ENCODE measurements at regions of chr1 and their contacts with region 1.

Region 1: DNA sequence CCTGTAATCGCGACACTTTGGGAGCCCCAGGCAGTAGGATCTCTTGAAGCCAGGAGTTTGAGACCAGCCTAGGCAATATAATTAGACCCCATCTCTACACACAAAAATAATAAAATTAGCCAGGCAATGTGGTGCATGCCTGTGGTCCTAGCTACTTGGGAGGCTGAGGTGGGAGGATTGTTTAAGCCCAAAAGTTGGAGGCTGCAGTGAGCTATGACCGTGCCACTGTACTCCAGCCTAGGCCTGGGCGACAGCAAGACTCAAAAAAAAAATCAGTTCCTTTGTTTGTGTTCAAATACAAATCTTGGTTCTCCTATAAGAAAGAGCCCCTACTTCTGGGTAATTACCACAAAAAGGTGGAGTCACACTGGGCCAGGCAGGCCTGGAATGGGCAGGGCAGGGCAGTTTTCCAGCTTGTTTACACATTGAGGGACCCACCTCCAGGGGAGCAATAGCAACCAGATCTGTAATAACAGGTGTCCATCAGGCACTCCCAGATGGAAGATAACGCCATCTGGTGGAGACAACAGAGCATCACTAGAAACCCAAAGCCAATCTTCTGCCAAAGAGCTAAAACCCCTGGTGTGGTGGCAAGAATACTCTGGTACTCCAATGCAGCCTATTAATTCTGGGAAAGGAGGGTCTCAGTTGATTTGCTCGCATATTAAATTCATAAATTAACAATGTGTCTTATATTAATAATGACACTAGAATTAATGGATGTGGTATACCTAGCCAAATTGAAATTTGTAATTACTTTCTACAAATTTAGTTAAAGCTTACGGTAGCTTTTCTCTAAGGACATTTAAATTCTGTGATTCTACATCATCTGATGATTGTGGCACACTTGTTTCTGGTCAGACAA is 13.2 kb downstream of the PPP1R15B start:
- DNase-seq: peak; percentile 97
- H3K4me3 Mint-ChIP-seq: no peak overlapping the region
- H3K27ac Mint-ChIP-seq: peak overlapping the region; percentile 84
- H3K4me1 Mint-ChIP-seq: no peaks in the 10 kb centered on the region
- H3K27me3 Mint-ChIP-seq: no peaks in the 10 kb centered on the region
- CTCF ChIP-seq: peak; percentile 98

Region 2: GRCh38 chr1:203682473-203683383 is 715.7 kb before region 1 on chr1:
- CTCF ChIA-PET with region 1: no interaction called
- POLR2A ChIA-PET with region 1: no interaction called
- intact Hi-C with region 1: no loop called
- DNase-seq: no peak
- H3K4me3 Mint-ChIP-seq: no peak overlapping the region
- H3K27ac Mint-ChIP-seq: no peak overlapping the region
- H3K4me1 Mint-ChIP-seq: peaks cover 5% of the 10 kb centered on the region
- H3K27me3 Mint-ChIP-seq: no peaks in the 10 kb centered on the region
- CTCF ChIP-seq: no peak

Region 3: GRCh38 chr1:203861379-203862184 is 536.9 kb before region 1 on chr1 and contains the start of gene SNRPE:
- CTCF ChIA-PET with region 1: interaction called, 11 read pairs
- POLR2A ChIA-PET with region 1: interaction called, 13 read pairs
- intact Hi-C with region 1: no loop called
- DNase-seq: peak; percentile 100
- H3K4me3 Mint-ChIP-seq: peak within 1 kb of the TSS; percentile 100
- H3K27ac Mint-ChIP-seq: peak within 1 kb of the TSS; percentile 100
- H3K4me1 Mint-ChIP-seq: peaks cover 43% of the 10 kb centered on the region
- H3K27me3 Mint-ChIP-seq: no peaks in the 10 kb centered on the region
- CTCF ChIP-seq: peak; percentile 100
- total RNA-seq, gene SNRPE: 358 and 423 TPM in 2 replicates

Region 4: DNA sequence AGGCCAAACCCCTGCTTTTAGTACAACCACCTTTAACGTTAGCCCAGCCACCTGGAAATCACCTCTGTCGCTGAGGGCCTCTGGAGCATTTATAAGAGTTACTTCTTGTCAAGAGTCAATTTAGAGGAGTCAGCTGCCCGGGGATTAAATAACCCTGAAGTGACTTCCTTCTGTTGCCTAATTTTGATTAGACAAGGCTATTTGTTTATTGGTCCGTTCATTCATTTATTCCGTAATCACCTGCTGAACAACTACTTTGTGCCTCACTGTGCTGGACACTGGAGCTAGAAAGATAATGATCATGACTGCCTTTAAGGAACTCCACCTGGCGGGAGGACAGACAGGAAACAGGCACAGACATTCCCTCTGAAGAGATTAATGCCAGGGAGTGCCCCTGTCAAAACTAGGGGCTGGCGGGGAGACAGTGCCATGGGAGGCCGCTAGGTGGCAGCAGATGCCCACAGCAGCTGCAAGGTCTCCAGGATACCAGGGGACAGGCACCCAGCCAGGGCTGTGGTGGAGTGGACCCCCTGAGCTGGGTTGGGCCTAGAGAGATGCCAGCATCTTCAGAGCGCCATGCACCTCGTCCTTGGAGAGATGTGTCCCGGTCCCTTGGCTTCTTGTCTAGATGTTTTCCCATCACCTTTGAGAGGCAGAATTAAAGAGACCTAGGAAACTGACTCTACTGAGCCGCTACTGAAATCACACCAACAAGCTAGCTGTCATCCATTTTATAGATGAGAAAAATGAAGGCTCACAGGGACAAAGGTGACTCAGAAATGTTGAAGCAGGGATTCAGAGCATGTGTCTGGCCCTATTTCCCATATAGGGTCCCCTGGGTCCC is 236.0 kb before region 1 on chr1:
- CTCF ChIA-PET with region 1: interaction called, 123 read pairs
- POLR2A ChIA-PET with region 1: interaction called, 12 read pairs
- intact Hi-C with region 1: loop called (anchors 1 kb)
- DNase-seq: peak; percentile 95
- H3K4me3 Mint-ChIP-seq: no peak overlapping the region
- H3K27ac Mint-ChIP-seq: no peak overlapping the region
- H3K4me1 Mint-ChIP-seq: peaks cover 6% of the 10 kb centered on the region
- H3K27me3 Mint-ChIP-seq: no peaks in the 10 kb centered on the region
- CTCF ChIP-seq: peak; percentile 100

Region 5: GRCh38 chr1:204296431-204296988 is 101.9 kb before region 1 on chr1:
- CTCF ChIA-PET with region 1: interaction called, 10 read pairs
- POLR2A ChIA-PET with region 1: interaction called, 4 read pairs
- intact Hi-C with region 1: no loop called
- DNase-seq: peak; percentile 62
- H3K4me3 Mint-ChIP-seq: peak overlapping the region; percentile 40
- H3K27ac Mint-ChIP-seq: peak overlapping the region; percentile 62
- H3K4me1 Mint-ChIP-seq: peaks cover 67% of the 10 kb centered on the region
- H3K27me3 Mint-ChIP-seq: no peaks in the 10 kb centered on the region
- CTCF ChIP-seq: no peak

Region 6: DNA sequence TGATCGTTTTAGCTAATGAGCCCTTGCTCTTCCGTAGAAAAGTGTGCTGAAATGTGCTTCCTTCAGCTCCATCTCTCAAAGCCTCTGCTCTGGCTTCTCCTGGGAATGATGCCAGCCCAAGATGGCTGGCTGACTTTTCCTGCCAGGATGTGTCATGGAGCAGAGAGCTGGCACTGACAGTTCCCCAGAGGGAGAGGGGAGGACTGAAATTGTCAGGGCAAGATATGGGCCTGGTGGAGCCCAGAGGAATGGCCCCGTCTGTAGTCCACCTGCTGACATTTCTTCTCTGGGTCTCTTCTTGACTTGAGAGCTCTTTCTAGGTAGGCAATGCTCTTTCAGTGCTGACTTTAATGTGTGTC is 13.5 kb before region 1 on chr1:
- CTCF ChIA-PET with region 1: interaction called, 109 read pairs
- POLR2A ChIA-PET with region 1: interaction called, 49 read pairs
- intact Hi-C with region 1: no loop called
- DNase-seq: peak; percentile 86
- H3K4me3 Mint-ChIP-seq: no peak overlapping the region
- H3K27ac Mint-ChIP-seq: no peak overlapping the region
- H3K4me1 Mint-ChIP-seq: no peaks in the 10 kb centered on the region
- H3K27me3 Mint-ChIP-seq: no peaks in the 10 kb centered on the region
- CTCF ChIP-seq: no peak

Region 7: DNA sequence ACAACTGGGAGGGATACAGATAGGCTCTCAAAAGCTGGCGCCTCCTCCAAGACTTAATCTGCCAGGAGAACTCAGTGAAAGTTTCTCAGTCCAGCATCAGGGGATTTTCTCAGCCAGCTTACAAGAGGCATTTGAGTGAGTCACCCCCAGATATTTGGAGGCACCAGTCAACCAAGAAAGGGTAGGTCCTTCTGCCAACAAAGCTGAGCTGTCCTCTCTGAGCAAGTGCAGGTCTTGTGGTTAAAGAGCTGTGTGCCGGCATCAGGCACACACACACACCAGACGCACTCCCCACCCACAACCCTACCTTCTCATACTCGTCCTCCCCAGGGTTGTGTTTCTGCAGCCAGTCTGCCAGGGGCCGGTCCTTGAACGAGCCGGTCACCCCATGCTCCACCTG is 40.2 kb after region 1 on chr1:
- CTCF ChIA-PET with region 1: interaction called, 8 read pairs
- POLR2A ChIA-PET with region 1: interaction called, 10 read pairs
- intact Hi-C with region 1: no loop called
- DNase-seq: peak; percentile 99
- H3K4me3 Mint-ChIP-seq: peak overlapping the region; percentile 6
- H3K27ac Mint-ChIP-seq: peak overlapping the region; percentile 94
- H3K4me1 Mint-ChIP-seq: peaks cover 65% of the 10 kb centered on the region
- H3K27me3 Mint-ChIP-seq: no peaks in the 10 kb centered on the region
- CTCF ChIP-seq: no peak

Region 8: DNA sequence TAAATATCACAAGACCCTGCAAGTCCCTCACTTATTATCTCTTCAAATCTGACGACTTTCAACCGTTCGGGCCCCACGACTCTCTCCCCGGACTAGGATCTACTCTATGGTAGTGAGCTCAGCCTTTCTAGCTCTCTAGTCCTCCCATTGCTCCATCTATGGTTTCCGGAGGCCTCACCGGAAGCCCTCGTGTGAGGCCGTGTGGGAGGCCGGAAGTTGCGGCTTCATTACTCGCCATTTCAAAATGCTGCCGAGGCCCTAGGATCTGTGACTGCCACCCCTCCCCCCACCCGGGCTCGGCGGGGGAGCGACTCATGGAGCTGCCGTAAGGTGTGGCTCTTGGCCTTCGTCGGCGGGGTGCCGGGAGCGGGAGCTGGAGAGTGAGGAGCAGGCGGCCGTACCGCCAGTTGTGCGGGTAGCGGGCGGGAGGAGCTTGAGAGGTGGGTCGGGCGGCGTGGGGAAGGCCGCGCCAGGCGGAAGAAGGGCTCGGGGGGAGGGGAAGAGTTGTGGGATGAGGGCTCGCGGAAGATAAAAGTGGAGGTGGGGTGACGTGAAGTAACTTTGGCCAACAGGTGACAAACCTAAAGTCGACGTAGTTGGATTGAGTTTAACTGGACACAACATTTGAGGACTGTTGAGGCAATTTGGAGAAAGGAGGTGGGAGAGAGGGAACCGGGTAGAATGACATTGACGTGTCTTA is 117.9 kb after region 1 on chr1 and contains the start of gene MDM4:
- CTCF ChIA-PET with region 1: interaction called, 12 read pairs
- POLR2A ChIA-PET with region 1: interaction called, 8 read pairs
- intact Hi-C with region 1: no loop called
- DNase-seq: peak; percentile 100
- H3K4me3 Mint-ChIP-seq: no peak within 1 kb of the TSS
- H3K27ac Mint-ChIP-seq: no peak within 1 kb of the TSS
- H3K4me1 Mint-ChIP-seq: peaks cover 12% of the 10 kb centered on the region
- H3K27me3 Mint-ChIP-seq: no peaks in the 10 kb centered on the region
- CTCF ChIP-seq: no peak
- total RNA-seq, gene MDM4: 162 and 174 TPM in 2 replicates

Region 9: DNA sequence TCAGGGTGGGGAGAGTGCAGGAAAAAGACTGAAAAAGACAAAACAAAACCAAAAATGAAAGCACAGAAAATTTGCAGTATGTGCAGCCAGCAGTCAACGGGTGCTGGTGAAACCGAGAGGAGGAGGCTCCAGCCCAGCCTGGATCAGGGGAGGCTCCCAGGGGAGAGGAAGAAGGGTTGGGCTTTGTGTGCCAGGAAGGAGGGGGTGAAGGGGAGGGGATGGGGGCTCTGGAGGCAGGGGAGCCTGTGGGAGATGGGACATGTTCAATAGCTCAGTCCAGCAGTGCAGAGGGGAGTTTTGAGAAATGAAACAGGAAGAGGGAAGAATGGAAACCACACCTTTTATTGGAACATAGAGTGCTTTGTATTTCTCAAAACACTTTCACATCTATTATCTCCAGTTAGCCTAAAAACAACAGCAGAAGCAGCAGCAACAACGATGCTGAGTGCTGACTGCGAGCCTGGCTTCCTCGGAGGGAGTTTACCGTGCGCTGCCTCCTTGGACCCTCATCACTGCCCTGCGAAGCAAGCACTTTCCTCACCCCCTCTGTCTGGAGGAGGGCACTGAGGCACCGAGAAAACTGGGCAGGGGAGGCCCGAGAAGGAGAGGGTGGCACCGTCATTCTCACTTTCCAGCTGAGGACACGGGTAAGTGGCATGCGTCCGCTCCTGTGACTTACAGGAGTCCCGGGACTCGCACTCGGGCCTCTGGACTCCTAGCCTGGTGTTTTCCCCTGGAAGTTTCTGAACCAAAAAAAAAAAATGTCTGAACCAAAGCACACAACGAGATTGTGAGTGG is 180.6 kb after region 1 on chr1:
- CTCF ChIA-PET with region 1: no interaction called
- POLR2A ChIA-PET with region 1: no interaction called
- intact Hi-C with region 1: no loop called
- DNase-seq: no peak
- H3K4me3 Mint-ChIP-seq: no peak overlapping the region
- H3K27ac Mint-ChIP-seq: no peak overlapping the region
- H3K4me1 Mint-ChIP-seq: peaks cover 5% of the 10 kb centered on the region
- H3K27me3 Mint-ChIP-seq: peaks cover 8% of the 10 kb centered on the region
- CTCF ChIP-seq: no peak

Measured in MCF 10A (cell line).